ENCODE measurements at regions of chr3 and their contacts with region 1.

Region 1: DNA sequence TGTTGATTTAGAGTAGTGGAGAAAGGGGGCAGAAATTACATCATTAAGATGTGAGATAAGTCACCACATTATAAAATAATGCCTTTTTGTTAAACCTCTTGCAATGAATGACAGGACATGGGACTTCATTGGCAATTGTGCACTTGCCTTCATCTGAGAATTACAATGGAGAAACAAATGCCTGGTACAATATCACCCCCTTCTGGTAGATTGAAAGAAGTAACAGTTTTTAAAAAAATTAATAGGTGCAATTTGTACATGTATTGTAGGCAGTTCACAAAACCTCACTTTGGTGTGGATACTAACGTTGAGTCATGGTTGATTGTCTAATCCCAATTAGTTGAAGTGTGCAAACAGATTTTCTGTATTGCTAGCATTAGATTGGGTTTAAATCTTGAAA is 4.6 kb upstream of the P2RY14 start:
- DNase-seq: no peak
- H3K4me3 ChIP-seq: no peak overlapping the region
- H3K27ac ChIP-seq: no peak overlapping the region
- H3K4me1 ChIP-seq: peaks cover 0 to 2% of the 10 kb centered on the region in 2 donors
- H3K27me3 ChIP-seq: no peaks in the 10 kb centered on the region
- CTCF ChIP-seq: peak; percentile 51 to 72 (median 68)

Region 2: DNA sequence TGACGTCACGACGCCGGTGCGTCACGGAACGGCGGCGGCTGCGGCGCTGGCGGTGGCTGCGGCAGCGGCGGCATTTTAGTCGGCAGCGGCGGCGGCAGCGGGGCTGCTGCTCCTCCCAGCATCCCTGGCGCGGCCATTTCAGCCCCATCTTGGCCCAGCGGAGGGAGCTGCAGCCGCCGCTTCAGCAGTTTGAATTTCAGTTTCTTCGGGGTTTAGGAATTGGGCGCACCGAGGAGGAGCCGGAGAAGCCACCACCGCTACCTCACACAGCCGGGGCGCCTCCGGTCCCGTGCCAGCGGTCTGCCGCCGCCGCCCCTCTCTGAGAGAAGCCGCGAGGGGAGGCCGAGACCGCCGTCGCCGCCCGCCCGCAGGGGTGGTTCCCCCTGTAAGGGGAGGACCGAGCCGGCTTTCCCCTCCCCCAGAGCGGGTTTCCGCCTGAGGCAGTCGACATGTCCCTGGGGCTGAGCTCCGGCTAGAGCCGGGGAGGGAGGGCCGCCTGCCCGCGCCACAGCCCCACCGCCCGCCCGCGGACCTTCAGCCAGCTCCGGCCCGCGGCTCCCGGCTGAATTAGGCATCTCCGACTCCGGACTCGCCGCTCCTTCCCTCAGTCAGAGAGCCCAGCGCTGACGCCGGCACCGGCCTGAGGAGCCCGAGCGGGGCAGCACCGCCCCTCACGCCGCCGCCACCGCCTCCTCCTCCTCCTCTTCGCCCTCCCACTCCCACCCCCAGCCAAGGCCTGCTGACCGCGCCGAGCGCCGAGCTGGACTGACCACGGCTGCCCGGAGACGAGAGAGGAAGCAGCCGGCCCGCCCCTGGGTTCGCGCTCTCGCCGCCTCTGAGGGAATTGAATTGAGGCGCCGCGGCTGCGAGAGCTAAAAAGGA is 874.5 kb before region 1 on chr3 and contains the start of gene TSC22D2:
- intact Hi-C with region 1: no loop called
- DNase-seq: peak; percentile 78 to 97
- H3K4me3 ChIP-seq: peak within 1 kb of the TSS; percentile 59 to 81
- H3K27ac ChIP-seq: peak within 1 kb of the TSS; percentile 97 to 99
- H3K4me1 ChIP-seq: peaks cover 0 to 3% of the 10 kb centered on the region in 2 donors
- H3K27me3 ChIP-seq: no peaks in the 10 kb centered on the region
- CTCF ChIP-seq: peak; percentile 12 to 40 (median 18)
- total RNA-seq, gene TSC22D2: 17.9 TPM

Region 3: GRCh38 chr3:150787741-150788370 is 495.1 kb before region 1 on chr3:
- intact Hi-C with region 1: loop called (anchors 2 kb)
- DNase-seq: peak in 1 of 2 donors; percentile 86
- H3K4me3 ChIP-seq: no peak overlapping the region
- H3K27ac ChIP-seq: no peak overlapping the region
- H3K4me1 ChIP-seq: no peaks in the 10 kb centered on the region
- H3K27me3 ChIP-seq: no peaks in the 10 kb centered on the region
- CTCF ChIP-seq: peak; percentile 67 to 87 (median 80)

Region 4: DNA sequence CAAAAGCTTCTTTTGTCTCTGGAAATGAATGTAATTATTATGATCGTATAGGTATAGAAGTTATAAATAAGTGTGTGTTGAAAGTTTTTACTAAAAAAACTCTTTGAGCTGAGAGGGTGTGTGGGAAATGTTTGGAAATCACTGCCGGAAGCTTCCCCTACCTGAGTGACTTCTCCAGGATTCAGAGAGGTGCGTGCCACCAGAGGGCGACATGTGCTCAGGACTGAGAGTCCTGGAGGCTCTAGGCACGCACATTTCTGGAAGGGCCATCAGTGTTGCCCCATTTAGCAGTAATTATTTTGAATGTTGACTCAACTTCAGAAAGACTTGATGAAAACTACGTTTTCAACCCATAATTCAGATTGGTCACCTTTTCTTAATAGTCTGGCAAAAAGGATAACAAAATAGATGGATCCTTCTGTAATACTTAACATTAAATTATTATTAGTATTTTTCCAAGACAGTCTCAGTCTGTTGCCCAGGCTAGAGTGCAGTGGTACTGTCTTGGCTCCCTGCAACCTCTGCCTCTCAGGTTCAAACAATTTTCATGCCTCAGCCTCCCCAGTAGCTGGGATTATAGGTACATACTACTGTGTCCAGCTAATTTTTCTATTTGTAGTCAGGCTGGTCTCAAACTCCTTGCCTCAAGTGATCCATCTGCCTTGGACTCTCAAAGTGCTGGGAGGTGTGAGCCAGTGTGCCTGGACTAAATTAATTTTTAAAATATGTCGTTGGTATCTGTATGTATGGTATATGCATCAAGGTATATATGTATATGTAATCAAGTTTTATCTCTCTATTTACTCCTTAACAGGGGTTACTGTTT is 114.4 kb before region 1 on chr3:
- intact Hi-C with region 1: loop called (anchors 1 kb)
- DNase-seq: peak in 1 of 2 donors; percentile 81
- H3K4me3 ChIP-seq: no peak overlapping the region
- H3K27ac ChIP-seq: peak overlapping the region in 1 of 2 donors; percentile 33
- H3K4me1 ChIP-seq: no peaks in the 10 kb centered on the region
- H3K27me3 ChIP-seq: no peaks in the 10 kb centered on the region
- CTCF ChIP-seq: peak; percentile 48 to 63 (median 56)

Region 5: GRCh38 chr3:151227807-151228665 is 54.9 kb before region 1 on chr3:
- intact Hi-C with region 1: loop called (anchors 1 kb)
- DNase-seq: peak; percentile 14 to 80
- H3K4me3 ChIP-seq: no peak overlapping the region
- H3K27ac ChIP-seq: peak overlapping the region in 1 of 2 donors; percentile 5
- H3K4me1 ChIP-seq: peaks cover 6 to 8% of the 10 kb centered on the region in 2 donors
- H3K27me3 ChIP-seq: no peaks in the 10 kb centered on the region
- CTCF ChIP-seq: peak; percentile 83 to 88 (median 86)

Region 6: GRCh38 chr3:151345859-151346258 is 62.9 kb after region 1 on chr3:
- intact Hi-C with region 1: no loop called
- DNase-seq: no peak
- H3K4me3 ChIP-seq: peak overlapping the region; percentile 32 to 44
- H3K27ac ChIP-seq: no peak overlapping the region
- H3K4me1 ChIP-seq: no peaks in the 10 kb centered on the region
- H3K27me3 ChIP-seq: no peaks in the 10 kb centered on the region
- CTCF ChIP-seq: no peak

Region 7: GRCh38 chr3:151644020-151644620 is 361.2 kb after region 1 on chr3:
- intact Hi-C with region 1: no loop called
- DNase-seq: no peak
- H3K4me3 ChIP-seq: no peak overlapping the region
- H3K27ac ChIP-seq: no peak overlapping the region
- H3K4me1 ChIP-seq: peaks cover 0 to under 1% of the 10 kb centered on the region in 2 donors
- H3K27me3 ChIP-seq: no peaks in the 10 kb centered on the region
- CTCF ChIP-seq: no peak